B cell (primary cell): ENCODE measurements at regions of chr16 and their contacts with region 1.

Region 1: GRCh38 chr16:89037261-89038152 is 56.1 kb upstream of the ACSF3 start:
- DNase-seq: peak; percentile 53
- ATAC-seq: peak; percentile 56
- H3K4me3 ChIP-seq: no peak overlapping the region
- H3K4me3 Mint-ChIP-seq: peak overlapping the region; percentile 32
- H3K27ac ChIP-seq: no peak overlapping the region
- H3K27ac Mint-ChIP-seq: no peak overlapping the region
- H3K4me1 ChIP-seq: peaks cover 22 to 39% of the 10 kb centered on the region in 2 donors
- H3K4me1 Mint-ChIP-seq: peaks cover 38% of the 10 kb centered on the region
- H3K27me3 ChIP-seq: peaks cover 0 to 23% (median 2%) of the 10 kb centered on the region in 4 experiments
- H3K27me3 Mint-ChIP-seq: peaks cover 11% of the 10 kb centered on the region
- CTCF ChIP-seq: no peak

Region 2: GRCh38 chr16:89093602-89094251 is 56.2 kb after region 1 on chr16 and contains the start of gene ACSF3:
- CTCF ChIA-PET with region 1: interaction called, 3 read pairs
- POLR2A ChIA-PET with region 1: no interaction called
- intact Hi-C with region 1: loop called (anchors 10 kb)
- DNase-seq: peak; percentile 83
- ATAC-seq: peak; percentile 61
- H3K4me3 ChIP-seq: peak within 1 kb of the TSS; percentile 55 to 84 (median 68)
- H3K4me3 Mint-ChIP-seq: peak within 1 kb of the TSS; percentile 92
- H3K27ac ChIP-seq: peak within 1 kb of the TSS; percentile 29 to 74
- H3K27ac Mint-ChIP-seq: peak within 1 kb of the TSS; percentile 92
- H3K4me1 ChIP-seq: peaks cover 43 to 53% of the 10 kb centered on the region in 2 donors
- H3K4me1 Mint-ChIP-seq: peaks cover 49% of the 10 kb centered on the region
- H3K27me3 ChIP-seq: peaks cover 0 to 11% (median 4%) of the 10 kb centered on the region in 4 experiments
- H3K27me3 Mint-ChIP-seq: peaks cover 23% of the 10 kb centered on the region
- CTCF ChIP-seq: no peak
- total RNA-seq, gene ACSF3: 113 and 115 TPM in 2 replicates